ENCODE measurements at regions of chr16 and their contacts with region 1.

Region 1: DNA sequence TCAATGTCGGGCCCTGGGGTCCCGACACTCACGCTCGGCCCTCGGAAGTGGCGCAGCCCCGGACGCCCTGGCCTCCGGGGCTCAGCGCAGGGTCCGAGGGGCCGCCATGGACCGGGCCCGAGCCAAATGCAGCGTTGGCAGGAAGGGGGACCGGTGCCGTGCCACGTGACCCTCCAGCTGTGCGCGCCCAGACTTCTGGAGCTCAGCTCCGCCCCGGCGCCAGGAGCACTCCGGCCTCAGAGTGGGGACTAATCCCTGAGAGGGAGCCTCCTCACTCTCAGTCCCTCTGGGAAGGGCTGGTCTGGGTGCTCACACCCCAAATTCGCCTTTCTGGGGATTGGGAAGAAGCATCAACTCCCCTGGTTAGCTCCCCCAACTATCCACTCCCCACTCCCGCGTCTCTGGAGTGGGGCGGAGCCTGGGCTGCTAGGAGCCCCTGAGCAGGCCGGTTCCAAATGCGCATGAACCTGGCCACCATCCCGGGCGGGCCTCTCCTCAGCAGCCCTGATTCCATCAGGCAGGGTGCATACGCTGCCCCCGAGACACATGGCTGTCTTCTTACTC is at the start of gene B3GNT9:
- DNase-seq: peak; percentile 56
- ATAC-seq: peak; percentile 69
- H3K4me3 ChIP-seq: peak within 1 kb of the TSS; percentile 64 to 77 (median 73)
- H3K27ac ChIP-seq: peak within 1 kb of the TSS; percentile 1
- H3K4me1 ChIP-seq: peaks cover 21% of the 10 kb centered on the region
- H3K27me3 ChIP-seq: no peaks in the 10 kb centered on the region; a peak in 1 of 5 replicates
- CTCF ChIP-seq: peak; percentile 8; the same call in 1 of the 2 replicates
- EP300 ChIP-seq: peak in 1 of 2 experiments; percentile 33; a peak in 1 of 4 replicates
- POLR2A ChIP-seq: peak; percentile 39 to 51; a peak in 2 of 4 replicates
- RAD21 ChIP-seq: 0 out of 2 replicates have a peak, but pooled peaks have one; percentile 15
- total RNA-seq, gene B3GNT9: 1.5 and 3.1 TPM in 2 replicates

Region 2: GRCh38 chr16:67084345-67085028 is 66.4 kb before region 1 on chr16:
- CTCF ChIA-PET with region 1: no interaction called
- POLR2A ChIA-PET with region 1: no interaction called
- in situ Hi-C with region 1: no loop called
- intact Hi-C with region 1: no loop called
- DNase-seq: peak; percentile 56
- ATAC-seq: 0 out of 3 replicates have a peak, but pooled peaks have one; percentile 36
- H3K4me3 ChIP-seq: no peak overlapping the region
- H3K27ac ChIP-seq: no peak overlapping the region
- H3K4me1 ChIP-seq: peaks cover 7% of the 10 kb centered on the region; the same call in 1 of the 2 replicates
- H3K27me3 ChIP-seq: no peaks in the 10 kb centered on the region
- CTCF ChIP-seq: no peak
- EP300 ChIP-seq: no peak
- POLR2A ChIP-seq: no peak
- RAD21 ChIP-seq: no peak

Region 3: GRCh38 chr16:67109407-67110135 is 41.3 kb before region 1 on chr16 and contains the start of gene PHAF1:
- CTCF ChIA-PET with region 1: interaction called, 20 read pairs
- POLR2A ChIA-PET with region 1: interaction called, 31 read pairs
- in situ Hi-C with region 1: no loop called
- intact Hi-C with region 1: loop called (anchors 2 kb)
- DNase-seq: peak; percentile 86
- ATAC-seq: peak; percentile 79
- H3K4me3 ChIP-seq: peak within 1 kb of the TSS; percentile 81 to 99 (median 83)
- H3K27ac ChIP-seq: peak within 1 kb of the TSS; percentile 90
- H3K4me1 ChIP-seq: peaks cover 48% of the 10 kb centered on the region
- H3K27me3 ChIP-seq: no peaks in the 10 kb centered on the region; a peak in 1 of 5 replicates
- CTCF ChIP-seq: peak; percentile 31; the same call in 1 of the 2 replicates
- EP300 ChIP-seq: peak in 1 of 2 experiments; percentile 17; a peak in 2 of 4 replicates
- POLR2A ChIP-seq: peak; percentile 98 to 99
- RAD21 ChIP-seq: peak; percentile 38
- total RNA-seq, gene PHAF1: 48.3 and 53.6 TPM in 2 replicates

Region 4: GRCh38 chr16:67115639-67116038 is 35.3 kb before region 1 on chr16:
- CTCF ChIA-PET with region 1: no interaction called
- POLR2A ChIA-PET with region 1: interaction called, 31 read pairs
- in situ Hi-C with region 1: no loop called
- intact Hi-C with region 1: loop called (anchors 2 kb)
- DNase-seq: no peak
- ATAC-seq: no peak
- H3K4me3 ChIP-seq: no peak overlapping the region; a peak in 1 of 6 replicates
- H3K27ac ChIP-seq: peak overlapping the region; percentile 87
- H3K4me1 ChIP-seq: peaks cover 72% of the 10 kb centered on the region
- H3K27me3 ChIP-seq: no peaks in the 10 kb centered on the region; a peak in 1 of 5 replicates
- CTCF ChIP-seq: no peak
- EP300 ChIP-seq: no peak
- POLR2A ChIP-seq: no peak
- RAD21 ChIP-seq: no peak

Region 5: GRCh38 chr16:67137605-67138004 is 13.3 kb before region 1 on chr16:
- CTCF ChIA-PET with region 1: no interaction called
- POLR2A ChIA-PET with region 1: interaction called, 16 read pairs
- in situ Hi-C with region 1: no loop called
- intact Hi-C with region 1: no loop called
- DNase-seq: no peak
- ATAC-seq: no peak
- H3K4me3 ChIP-seq: no peak overlapping the region
- H3K27ac ChIP-seq: no peak overlapping the region
- H3K4me1 ChIP-seq: no peaks in the 10 kb centered on the region
- H3K27me3 ChIP-seq: no peaks in the 10 kb centered on the region
- CTCF ChIP-seq: no peak
- EP300 ChIP-seq: no peak
- POLR2A ChIP-seq: no peak
- RAD21 ChIP-seq: no peak

Measured in HepG2 (cell line).